ENCODE measurements at regions of chr5 and their contacts with region 1.

Region 1: DNA sequence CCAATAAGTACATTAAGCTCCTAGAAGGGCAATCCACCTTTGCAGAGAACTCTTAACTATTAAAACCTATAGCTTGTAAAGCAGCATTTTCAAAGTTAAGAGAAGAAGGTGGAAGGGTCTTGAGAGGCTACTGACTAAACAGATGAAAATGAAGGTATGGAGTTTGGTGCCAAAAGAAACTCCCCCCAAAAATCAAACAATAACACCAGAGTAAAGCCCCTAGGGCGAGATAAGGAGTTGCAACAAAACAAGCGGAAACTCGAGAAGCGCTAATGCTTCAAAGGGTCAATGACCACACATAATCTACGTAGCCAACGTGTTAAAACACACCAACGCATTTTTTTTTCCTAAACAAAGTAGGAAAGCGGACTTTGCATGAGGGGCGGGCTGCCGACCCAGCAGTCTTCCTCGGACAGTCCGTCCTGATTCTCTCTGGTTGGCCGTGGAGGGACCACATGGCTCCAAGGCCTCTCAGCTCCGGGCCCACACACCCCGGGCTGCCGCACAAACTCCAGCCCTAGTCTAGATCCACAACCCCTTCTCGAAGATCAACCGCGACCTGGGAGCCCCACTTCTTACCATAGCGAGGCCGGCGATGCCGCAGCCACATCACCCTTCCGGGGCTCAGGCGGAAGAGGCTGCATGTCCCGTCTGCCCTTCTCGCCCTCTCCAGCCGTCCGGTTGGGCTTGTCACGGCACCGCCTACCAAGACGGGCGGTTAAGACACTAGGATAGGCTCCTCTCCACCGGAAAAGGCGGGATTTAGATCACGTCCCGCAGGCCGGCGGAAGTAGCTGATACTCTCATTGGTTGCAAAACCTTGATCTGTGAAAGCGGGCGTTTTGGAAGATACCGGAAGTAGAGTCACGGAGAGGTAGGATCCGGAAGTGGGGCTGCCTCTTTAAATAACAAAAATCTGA is at the starts of genes TMEM167A and XRCC4:
- DNase-seq: peak; percentile 95

Region 2: DNA sequence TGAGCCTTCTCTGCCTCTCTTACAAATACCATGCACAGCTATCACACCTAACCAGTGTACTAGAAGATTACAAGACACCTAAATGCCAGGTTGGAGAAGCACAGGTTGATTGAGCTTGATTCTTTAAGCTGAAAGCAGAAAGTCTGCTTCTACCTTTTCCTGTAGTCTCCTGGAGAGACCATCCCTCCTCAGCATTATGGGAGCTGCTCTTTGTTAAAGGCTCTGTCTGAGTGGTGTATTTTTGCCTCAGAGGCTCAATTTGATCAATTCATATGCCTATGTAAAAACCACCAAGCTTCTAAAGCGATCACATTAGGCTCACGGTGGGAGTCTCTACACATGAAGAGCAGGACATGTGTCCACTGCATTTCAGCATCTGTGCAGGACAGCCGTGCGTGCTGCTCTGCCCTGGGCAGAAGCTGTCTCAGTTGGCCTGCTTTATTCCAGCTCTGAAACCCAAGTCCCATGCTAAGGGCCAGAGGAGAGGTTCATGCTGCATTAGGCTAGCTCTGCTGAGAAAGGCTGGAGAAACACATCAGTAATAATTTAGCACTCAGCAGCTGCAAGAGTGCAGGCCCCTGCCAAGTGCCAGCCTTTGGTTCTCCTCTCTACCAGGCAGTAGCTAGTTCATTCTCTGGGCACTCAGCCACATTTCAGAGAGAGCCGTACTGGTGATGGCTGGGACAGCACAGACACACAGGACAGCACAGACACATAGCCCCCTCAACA is 41.5 kb before region 1 on chr5:
- CTCF ChIA-PET with region 1: no interaction called
- POLR2A ChIA-PET with region 1: interaction called, 11 read pairs
- DNase-seq: no peak

Region 3: GRCh38 chr5:83740741-83741140 is 663.7 kb after region 1 on chr5:
- CTCF ChIA-PET with region 1: no interaction called
- POLR2A ChIA-PET with region 1: no interaction called
- DNase-seq: no peak

Measured in HEK293T (cell line).